Spleen (tissue), 13 donors: ENCODE measurements at regions of chr4 and their contacts with region 1.

Region 1: GRCh38 chr4:2262143-2262943 is 434 bp upstream of the MXD4 start:
- DNase-seq: peak; percentile 100
- H3K4me3 ChIP-seq: peak overlapping the region; percentile 56 to 99 (median 97)
- H3K27ac ChIP-seq: peak overlapping the region; percentile 91 to 100 (median 98)
- H3K4me1 ChIP-seq: peaks cover 37 to 80% (median 62%) of the 10 kb centered on the region in 6 donors
- H3K27me3 ChIP-seq: no peaks in the 10 kb centered on the region
- CTCF ChIP-seq: peak in 2 of 11 experiments; percentile 11 to 17
- POLR2A ChIP-seq: peak in 2 of 3 donors; percentile 96 to 99

Region 2: DNA sequence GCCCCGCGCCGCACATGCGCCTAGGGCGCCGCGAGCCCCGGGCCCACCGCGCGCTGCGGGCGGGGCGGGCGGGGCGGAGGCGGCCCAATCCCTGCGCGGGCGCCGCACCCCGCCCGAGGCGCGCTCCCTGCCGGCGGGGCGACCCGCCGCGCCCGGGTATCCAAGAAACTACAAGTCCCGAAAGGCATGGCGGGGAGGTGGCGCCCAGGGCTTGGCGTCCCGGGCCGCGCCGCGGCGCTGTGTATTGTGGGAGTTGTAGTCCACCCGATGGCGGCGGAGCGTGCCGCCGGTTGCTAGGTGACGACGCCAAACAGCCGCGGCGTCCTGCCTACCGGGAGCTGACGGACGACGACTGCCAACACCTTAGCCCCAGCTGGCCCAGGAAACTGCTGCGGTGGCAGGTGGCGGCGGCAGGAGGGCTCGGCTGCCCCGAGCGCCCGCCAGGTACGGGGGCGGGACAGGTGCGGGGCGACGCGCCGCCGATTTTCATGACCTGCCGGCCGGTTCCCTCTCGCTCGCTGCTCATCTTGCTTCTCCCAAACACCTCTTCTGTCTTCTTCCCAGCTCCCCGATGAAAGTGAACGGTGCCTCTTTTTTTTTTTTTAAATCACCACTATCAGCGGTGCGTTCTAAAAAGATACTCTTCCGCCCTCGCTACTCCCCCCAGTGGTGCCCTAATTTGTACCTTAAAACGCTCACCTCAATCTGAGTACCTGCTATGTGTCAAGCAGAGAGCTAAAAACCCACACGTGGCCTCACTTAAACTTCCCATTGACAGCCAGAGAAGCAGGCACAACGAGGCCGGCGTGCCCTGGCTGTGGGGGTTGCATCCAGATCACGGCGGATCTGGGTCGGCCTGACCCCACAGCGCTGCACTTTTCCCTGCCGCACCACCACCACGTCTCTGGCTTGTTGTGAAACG is 156.6 kb after region 1 on chr4 and contains the start of gene CFAP99:
- intact Hi-C with region 1: loop called (anchors 10 kb)
- DNase-seq: peak; percentile 99
- H3K4me3 ChIP-seq: peak within 1 kb of the TSS; percentile 41 to 94 (median 72)
- H3K27ac ChIP-seq: peak within 1 kb of the TSS in 6 of 8 donors; percentile 13 to 87 (median 59)
- H3K4me1 ChIP-seq: peaks cover 24 to 57% (median 48%) of the 10 kb centered on the region in 6 donors
- H3K27me3 ChIP-seq: peaks cover 0 to 86% (median 29%) of the 10 kb centered on the region in 7 donors
- CTCF ChIP-seq: peak in 5 of 11 experiments; percentile 12 to 36 (median 29)
- POLR2A ChIP-seq: no peak
- total RNA-seq, gene CFAP99: 0.22 TPM in 1 of 7 donors, not detected in the others